ENCODE measurements at regions of chr1 and their contacts with region 1.

Region 1: DNA sequence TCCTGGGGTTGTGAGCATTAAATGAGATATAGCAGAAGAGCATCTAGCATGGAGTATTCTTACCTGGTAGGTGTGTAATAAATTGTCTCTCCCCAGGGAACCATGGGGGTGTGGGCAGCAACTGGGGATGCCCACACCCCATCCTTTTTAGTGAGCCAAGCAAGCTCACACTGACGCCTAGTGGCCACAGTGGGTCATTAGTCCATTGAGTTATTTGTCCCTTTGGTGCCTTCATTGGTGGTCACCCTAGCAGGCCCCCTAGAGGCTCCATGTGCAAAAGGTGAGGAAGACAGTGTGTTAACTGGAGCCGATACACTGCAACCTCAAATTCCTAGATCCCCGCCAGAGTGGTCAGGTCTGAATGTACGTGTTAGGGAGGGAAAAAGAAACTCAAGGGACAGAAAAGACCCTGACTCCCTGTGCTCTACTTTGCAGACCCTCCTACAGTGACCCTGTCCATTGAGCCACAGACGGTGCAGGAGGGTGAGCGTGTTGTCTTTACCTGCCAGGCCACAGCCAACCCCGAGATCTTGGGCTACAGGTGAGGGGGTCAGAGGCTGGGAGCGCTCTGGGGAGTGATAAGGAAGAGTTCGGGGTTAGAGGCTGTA is 93.3 kb upstream of the CD1D start:
- DNase-seq: peak; percentile 73 to 80
- H3K4me3 ChIP-seq: no peak overlapping the region
- H3K4me3 Mint-ChIP-seq: no peak overlapping the region
- H3K27ac Mint-ChIP-seq: no peak overlapping the region
- H3K4me1 ChIP-seq: no peaks in the 10 kb centered on the region
- H3K4me1 Mint-ChIP-seq: no peaks in the 10 kb centered on the region
- H3K27me3 ChIP-seq: no peaks in the 10 kb centered on the region
- H3K27me3 Mint-ChIP-seq: no peaks in the 10 kb centered on the region
- CTCF ChIP-seq: peak; percentile 90 to 98

Region 2: GRCh38 chr1:157963713-157964112 is 123.7 kb before region 1 on chr1:
- CTCF ChIA-PET with region 1: interaction called, 3 read pairs
- POLR2A ChIA-PET with region 1: no interaction called
- intact Hi-C with region 1: loop called (anchors 1 kb)
- DNase-seq: peak; percentile 79 to 82
- H3K4me3 ChIP-seq: no peak overlapping the region
- H3K4me3 Mint-ChIP-seq: no peak overlapping the region
- H3K27ac Mint-ChIP-seq: no peak overlapping the region
- H3K4me1 ChIP-seq: peaks cover 32% of the 10 kb centered on the region
- H3K4me1 Mint-ChIP-seq: peaks cover 38% of the 10 kb centered on the region
- H3K27me3 ChIP-seq: no peaks in the 10 kb centered on the region
- H3K27me3 Mint-ChIP-seq: peaks cover 3% of the 10 kb centered on the region
- CTCF ChIP-seq: peak; percentile 86 to 94

Region 3: DNA sequence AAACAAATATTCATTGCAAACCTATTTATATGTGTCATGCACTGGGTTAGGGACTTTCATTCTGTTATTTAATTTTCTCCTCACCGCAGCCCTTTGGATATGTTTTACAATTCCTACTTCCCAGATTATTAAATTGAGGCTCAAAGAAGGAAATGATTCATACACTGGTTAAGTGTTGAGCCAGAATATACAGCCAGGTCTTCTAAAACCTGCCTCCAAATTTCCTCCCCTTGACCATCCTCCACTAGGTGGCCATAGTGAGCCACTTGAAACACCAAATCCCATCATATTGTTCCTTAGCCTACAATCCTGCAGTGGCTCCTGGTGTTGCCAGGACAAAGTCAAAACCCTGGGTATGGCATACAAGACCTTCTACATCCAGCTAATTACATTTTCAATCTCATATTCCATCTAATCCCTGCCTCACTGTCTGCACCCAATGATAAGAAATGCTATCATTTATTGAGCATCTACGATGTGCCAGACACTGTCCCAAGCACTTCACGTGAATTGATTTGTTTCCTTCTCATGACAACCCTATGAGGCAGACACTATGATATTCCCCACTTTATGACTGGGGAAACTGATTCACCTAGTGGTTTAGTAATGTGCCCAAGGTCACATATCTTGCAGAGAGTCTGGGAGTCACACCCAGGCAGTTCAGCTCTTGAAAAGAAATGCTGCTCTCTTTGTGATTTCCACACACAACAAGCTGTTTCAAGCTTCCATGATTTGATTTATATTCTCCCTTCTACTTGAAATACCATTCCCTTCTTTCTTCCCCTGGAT is 117.5 kb before region 1 on chr1:
- CTCF ChIA-PET with region 1: interaction called, 4 read pairs
- POLR2A ChIA-PET with region 1: no interaction called
- intact Hi-C with region 1: loop called (anchors 1 kb)
- DNase-seq: peak; percentile 42 to 54
- H3K4me3 ChIP-seq: no peak overlapping the region
- H3K4me3 Mint-ChIP-seq: no peak overlapping the region
- H3K27ac Mint-ChIP-seq: no peak overlapping the region
- H3K4me1 ChIP-seq: peaks cover 19% of the 10 kb centered on the region
- H3K4me1 Mint-ChIP-seq: peaks cover 19% of the 10 kb centered on the region
- H3K27me3 ChIP-seq: no peaks in the 10 kb centered on the region
- H3K27me3 Mint-ChIP-seq: no peaks in the 10 kb centered on the region
- CTCF ChIP-seq: peak; percentile 66 to 74

Region 4: GRCh38 chr1:157983787-157984186 is 103.6 kb before region 1 on chr1:
- CTCF ChIA-PET with region 1: interaction called, 3 read pairs
- POLR2A ChIA-PET with region 1: no interaction called
- intact Hi-C with region 1: loop called (anchors 1 kb)
- DNase-seq: no peak
- H3K4me3 ChIP-seq: no peak overlapping the region
- H3K4me3 Mint-ChIP-seq: no peak overlapping the region
- H3K27ac Mint-ChIP-seq: no peak overlapping the region
- H3K4me1 ChIP-seq: no peaks in the 10 kb centered on the region
- H3K4me1 Mint-ChIP-seq: no peaks in the 10 kb centered on the region
- H3K27me3 ChIP-seq: no peaks in the 10 kb centered on the region; the same call in 1 of the 2 replicates
- H3K27me3 Mint-ChIP-seq: peaks cover 6% of the 10 kb centered on the region
- CTCF ChIP-seq: no peak

Region 5: GRCh38 chr1:157992031-157992832 is 95.2 kb before region 1 on chr1:
- CTCF ChIA-PET with region 1: interaction called, 19 read pairs
- POLR2A ChIA-PET with region 1: no interaction called
- intact Hi-C with region 1: loop called (anchors 1 kb)
- DNase-seq: peak; percentile 68 to 75
- H3K4me3 ChIP-seq: no peak overlapping the region
- H3K4me3 Mint-ChIP-seq: peak overlapping the region; percentile 99
- H3K27ac Mint-ChIP-seq: peak overlapping the region; percentile 96
- H3K4me1 ChIP-seq: peaks cover 24% of the 10 kb centered on the region
- H3K4me1 Mint-ChIP-seq: peaks cover 28% of the 10 kb centered on the region
- H3K27me3 ChIP-seq: no peaks in the 10 kb centered on the region
- H3K27me3 Mint-ChIP-seq: no peaks in the 10 kb centered on the region
- CTCF ChIP-seq: peak; percentile 92 to 96

Region 6: DNA sequence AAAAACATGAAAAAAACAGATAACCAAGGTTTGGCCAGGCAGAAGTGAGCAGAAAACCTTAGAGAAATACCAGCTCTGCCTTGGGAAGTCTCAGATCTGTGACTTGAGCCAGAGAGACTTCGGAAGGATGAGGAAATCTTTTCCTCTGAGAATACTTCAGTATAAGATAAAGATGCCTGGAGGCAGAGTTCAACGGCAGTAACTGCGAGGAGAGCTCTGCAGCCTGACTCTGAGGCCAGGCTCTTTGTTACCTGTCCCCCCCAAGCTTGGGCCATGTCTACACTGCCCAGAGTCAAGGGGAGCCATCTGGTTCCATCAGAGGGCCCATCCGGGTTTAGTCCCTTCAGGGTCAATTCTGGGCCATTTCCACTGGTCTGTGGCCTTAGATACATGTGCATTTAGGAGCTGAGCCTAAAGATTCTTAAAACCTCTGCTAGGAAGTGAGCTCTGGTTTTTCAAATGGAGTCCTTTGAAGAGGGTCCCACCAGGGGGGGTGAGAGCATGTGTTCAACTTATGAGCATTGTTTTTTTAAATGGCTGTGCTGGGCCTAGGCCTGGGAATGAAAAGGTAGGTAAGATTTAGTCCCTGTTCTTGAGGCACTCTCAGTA is 85.3 kb before region 1 on chr1:
- CTCF ChIA-PET with region 1: interaction called, 6 read pairs
- POLR2A ChIA-PET with region 1: no interaction called
- intact Hi-C with region 1: loop called (anchors 2 kb)
- DNase-seq: peak; percentile 38 to 55
- H3K4me3 ChIP-seq: no peak overlapping the region
- H3K4me3 Mint-ChIP-seq: peak overlapping the region; percentile 30
- H3K27ac Mint-ChIP-seq: peak overlapping the region; percentile 65
- H3K4me1 ChIP-seq: peaks cover 54% of the 10 kb centered on the region
- H3K4me1 Mint-ChIP-seq: peaks cover 38% of the 10 kb centered on the region
- H3K27me3 ChIP-seq: no peaks in the 10 kb centered on the region
- H3K27me3 Mint-ChIP-seq: no peaks in the 10 kb centered on the region
- CTCF ChIP-seq: no peak

Region 7: GRCh38 chr1:158035976-158036583 is 51.3 kb before region 1 on chr1:
- CTCF ChIA-PET with region 1: no interaction called
- POLR2A ChIA-PET with region 1: no interaction called
- intact Hi-C with region 1: loop called (anchors 1 kb)
- DNase-seq: peak in 1 of 2 experiments; percentile 41
- H3K4me3 ChIP-seq: no peak overlapping the region
- H3K4me3 Mint-ChIP-seq: no peak overlapping the region
- H3K27ac Mint-ChIP-seq: no peak overlapping the region
- H3K4me1 ChIP-seq: peaks cover 6% of the 10 kb centered on the region
- H3K4me1 Mint-ChIP-seq: peaks cover 8% of the 10 kb centered on the region
- H3K27me3 ChIP-seq: no peaks in the 10 kb centered on the region
- H3K27me3 Mint-ChIP-seq: no peaks in the 10 kb centered on the region
- CTCF ChIP-seq: peak; percentile 50 to 81